Left ventricle myocardium superior (tissue), 1 donor: ENCODE measurements at regions of chr22 and their contacts with region 1.

Region 1: GRCh38 chr22:29837780-29838598 is at the start of gene ASCC2:
- DNase-seq: peak; percentile 100
- ATAC-seq: peak; percentile 99
- total RNA-seq, gene ASCC2: 31.5 TPM

Region 2: GRCh38 chr22:29766632-29767170 is 71.3 kb before region 1 on chr22 and contains the start of gene ZMAT5:
- intact Hi-C with region 1: loop called (anchors 5 kb)
- DNase-seq: peak; percentile 95
- ATAC-seq: peak; percentile 98
- total RNA-seq, gene ZMAT5: 21.6 TPM